Prostate gland (tissue), 2 donors: ENCODE measurements at regions of chr10 and their contacts with region 1.

Region 1: DNA sequence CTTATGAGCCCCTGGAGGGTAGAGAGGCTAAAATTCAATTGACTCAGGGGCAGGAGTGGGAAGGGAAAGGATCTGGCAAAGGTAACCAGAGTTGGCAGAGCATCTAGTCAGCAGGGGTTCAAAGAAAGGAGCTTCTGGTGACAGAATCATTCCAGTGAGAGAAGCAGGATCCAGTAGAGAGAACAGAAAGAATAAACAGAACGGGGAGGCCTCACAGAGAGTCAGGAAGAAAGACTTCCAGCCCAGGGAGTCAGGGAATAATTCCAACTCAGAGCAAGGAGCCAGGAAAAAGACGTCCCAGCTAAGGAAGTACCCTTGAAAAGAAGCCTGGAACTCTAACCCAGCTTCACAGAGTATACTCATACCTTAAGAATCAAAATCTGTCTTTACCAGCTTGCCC is 66.6 kb upstream of the CPXM2 start:
- DNase-seq: no peak
- H3K4me3 ChIP-seq: no peak overlapping the region
- H3K27ac ChIP-seq: no peak overlapping the region
- H3K4me1 ChIP-seq: no peaks in the 10 kb centered on the region
- H3K27me3 ChIP-seq: no peaks in the 10 kb centered on the region
- CTCF ChIP-seq: no peak
- POLR2A ChIP-seq: no peak

Region 2: DNA sequence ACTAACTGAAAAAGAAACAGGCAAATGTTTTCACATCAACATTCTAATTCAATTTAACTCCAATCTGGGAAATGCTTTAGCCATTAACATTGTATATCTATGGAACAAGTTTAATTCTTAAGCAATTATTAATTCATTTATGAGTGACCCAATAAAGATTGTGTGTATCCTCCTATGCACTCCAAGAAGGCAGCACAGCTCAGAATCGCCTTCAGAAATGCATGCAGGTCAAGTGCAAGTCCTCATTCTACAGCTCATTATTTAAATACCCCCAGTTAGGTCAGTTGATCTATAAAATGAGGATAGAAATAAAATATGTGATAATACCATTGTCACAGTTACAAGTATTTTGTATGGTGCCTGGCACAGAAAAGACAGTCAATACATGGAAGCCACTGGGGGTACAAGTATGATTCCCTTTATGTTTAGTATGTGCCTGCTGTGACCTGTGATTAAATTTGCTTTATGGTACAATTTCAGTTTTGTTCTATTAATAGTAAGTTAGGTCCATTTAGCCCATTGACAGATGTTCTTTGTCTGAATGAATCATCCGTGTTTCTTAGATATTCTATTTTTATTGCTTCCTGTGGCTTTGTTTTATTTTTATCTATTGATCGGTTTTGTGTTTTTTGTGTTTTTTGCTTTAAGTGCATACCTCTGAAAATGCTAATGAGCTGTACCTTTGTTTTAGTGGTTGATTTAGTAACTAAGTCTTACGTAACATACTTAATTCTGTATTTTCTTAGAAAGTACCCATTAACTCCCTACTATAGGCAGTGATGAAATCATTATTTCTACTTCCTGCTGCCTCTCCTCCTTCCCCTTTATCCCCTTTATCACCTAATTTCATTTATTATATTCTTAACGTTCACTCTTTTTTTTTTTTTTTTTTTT is 109.4 kb before region 1 on chr10:
- intact Hi-C with region 1: no loop called
- DNase-seq: no peak
- H3K4me3 ChIP-seq: no peak overlapping the region
- H3K27ac ChIP-seq: no peak overlapping the region
- H3K4me1 ChIP-seq: no peaks in the 10 kb centered on the region
- H3K27me3 ChIP-seq: no peaks in the 10 kb centered on the region
- CTCF ChIP-seq: no peak
- POLR2A ChIP-seq: no peak

Region 3: DNA sequence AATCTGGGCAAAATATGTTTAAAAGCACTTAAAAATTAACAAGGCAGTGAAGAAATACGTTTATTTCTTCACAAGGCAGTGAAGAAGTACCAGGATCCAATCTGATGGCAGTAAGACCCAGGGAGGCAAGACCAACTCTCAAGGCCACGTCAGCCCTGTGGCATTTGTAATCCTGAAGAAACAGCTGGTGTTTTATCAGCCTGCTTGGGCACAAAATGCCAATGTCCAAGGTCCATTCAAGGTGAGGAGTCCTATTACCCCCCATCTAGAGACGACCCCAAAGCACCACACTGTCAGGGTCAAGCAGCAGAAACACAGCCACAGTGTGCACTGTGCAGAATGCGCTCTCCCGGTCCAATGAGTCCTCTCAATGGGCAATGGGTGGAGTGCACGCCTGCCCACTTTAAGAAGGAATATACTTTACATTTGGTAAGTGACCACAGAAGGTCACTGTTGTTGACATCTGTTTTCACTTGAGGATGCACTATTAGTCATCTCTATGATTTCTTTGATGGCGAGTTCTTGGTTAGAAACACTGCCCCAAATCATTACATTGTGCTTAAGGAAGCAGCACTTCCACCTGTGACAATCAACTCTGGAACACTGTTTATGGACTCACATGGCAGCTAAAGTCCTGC is 79.5 kb before region 1 on chr10:
- intact Hi-C with region 1: no loop called
- DNase-seq: no peak
- H3K4me3 ChIP-seq: no peak overlapping the region
- H3K27ac ChIP-seq: no peak overlapping the region
- H3K4me1 ChIP-seq: no peaks in the 10 kb centered on the region
- H3K27me3 ChIP-seq: no peaks in the 10 kb centered on the region
- CTCF ChIP-seq: no peak
- POLR2A ChIP-seq: no peak

Region 4: DNA sequence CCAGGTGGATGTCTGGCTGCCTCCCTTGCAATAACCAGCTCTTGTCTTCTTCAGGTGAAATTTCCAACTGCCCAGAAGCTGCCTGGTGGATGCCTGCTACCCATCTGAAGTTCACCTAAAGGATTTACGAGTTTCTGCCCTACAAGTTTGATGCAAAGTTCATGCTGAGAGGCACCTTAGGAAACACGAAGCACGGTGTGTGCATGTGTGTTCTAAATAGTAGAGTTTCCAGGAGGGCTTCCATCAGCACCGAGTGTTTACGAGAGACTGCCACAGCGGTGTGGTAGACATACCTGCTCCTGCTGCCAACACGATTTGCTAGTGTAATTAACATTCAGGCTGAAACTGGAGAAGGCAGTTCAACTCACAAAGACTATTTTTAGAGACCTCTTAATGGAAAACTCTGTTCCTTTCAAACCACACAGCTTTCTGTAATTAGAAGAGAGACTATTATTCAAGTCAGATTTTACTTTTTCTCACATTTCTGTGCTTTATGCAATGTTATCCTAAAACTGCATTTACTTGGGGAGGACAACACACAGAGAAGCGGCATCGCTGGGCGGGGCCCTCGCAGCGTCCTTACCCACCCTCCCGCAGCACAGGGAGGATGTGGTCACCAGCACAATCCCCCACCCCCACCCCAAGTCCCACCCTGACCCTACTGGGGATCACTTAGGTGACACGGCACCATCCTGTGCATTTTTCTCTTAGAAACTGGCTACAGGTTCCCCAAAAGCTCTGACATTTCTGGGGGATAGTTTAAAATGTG is 51.2 kb before region 1 on chr10:
- intact Hi-C with region 1: loop called (anchors 5 kb)
- DNase-seq: no peak
- H3K4me3 ChIP-seq: no peak overlapping the region
- H3K27ac ChIP-seq: no peak overlapping the region
- H3K4me1 ChIP-seq: no peaks in the 10 kb centered on the region
- H3K27me3 ChIP-seq: no peaks in the 10 kb centered on the region
- CTCF ChIP-seq: no peak
- POLR2A ChIP-seq: no peak

Region 5: GRCh38 chr10:123994417-123995081 is 36.3 kb after region 1 on chr10:
- intact Hi-C with region 1: no loop called
- DNase-seq: peak; percentile 80
- H3K4me3 ChIP-seq: no peak overlapping the region
- H3K27ac ChIP-seq: no peak overlapping the region
- H3K4me1 ChIP-seq: no peaks in the 10 kb centered on the region
- H3K27me3 ChIP-seq: peaks cover 7% of the 10 kb centered on the region
- CTCF ChIP-seq: peak; percentile 97 to 99 (median 98)
- POLR2A ChIP-seq: no peak

Region 6: DNA sequence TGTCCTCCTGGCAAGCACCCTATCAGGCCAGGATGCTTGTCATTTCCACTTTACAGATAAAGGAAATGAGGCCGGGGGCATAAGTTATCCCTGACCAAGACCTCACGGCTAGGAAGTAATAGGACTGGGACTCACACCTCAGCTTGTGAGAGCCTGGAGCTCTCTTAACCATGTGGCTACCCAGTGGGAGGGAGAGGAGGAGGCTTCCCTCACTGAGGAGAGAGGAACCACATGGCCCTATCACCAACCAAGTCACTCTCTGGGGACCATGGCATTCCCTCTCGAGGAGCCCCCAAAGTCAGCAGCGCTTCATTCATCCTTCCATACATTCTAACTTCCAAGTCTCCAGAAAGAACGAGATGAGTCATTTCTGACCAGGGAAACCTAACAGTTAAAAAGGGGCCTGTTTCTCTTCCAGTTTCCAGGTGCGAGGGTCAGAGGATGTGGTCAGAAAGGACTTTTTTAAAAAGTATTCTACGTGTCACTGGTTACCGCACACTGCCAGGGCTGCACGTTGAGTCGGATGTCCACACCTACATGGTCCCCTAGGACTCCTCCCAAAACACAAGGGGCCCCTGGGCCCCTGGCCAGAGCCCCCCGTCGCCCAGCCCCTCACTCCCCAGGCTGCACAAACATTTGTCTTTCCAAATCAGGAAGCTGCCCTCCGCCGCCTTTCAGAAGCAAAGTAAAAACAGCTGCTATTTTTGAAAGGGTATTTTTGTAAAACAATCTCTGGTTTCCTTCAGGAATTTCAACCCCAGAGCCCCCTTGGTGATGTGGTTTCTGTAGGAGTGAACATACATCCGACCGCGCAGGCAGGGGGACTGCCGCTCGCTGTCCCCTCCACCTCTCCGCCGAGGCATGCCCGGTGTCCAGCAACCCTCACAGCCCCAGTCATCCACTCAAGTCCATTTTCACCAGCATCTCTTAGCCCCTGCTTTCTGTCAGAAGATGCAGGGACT is 263.4 kb after region 1 on chr10:
- intact Hi-C with region 1: no loop called
- DNase-seq: no peak
- H3K4me3 ChIP-seq: no peak overlapping the region
- H3K27ac ChIP-seq: no peak overlapping the region
- H3K4me1 ChIP-seq: no peaks in the 10 kb centered on the region
- H3K27me3 ChIP-seq: no peaks in the 10 kb centered on the region
- CTCF ChIP-seq: no peak
- POLR2A ChIP-seq: no peak